Endothelial cell of umbilical vein (primary cell): ENCODE measurements at regions of chr11 and their contacts with region 1.

Region 1: GRCh38 chr11:76734456-76735420 is 48.4 kb upstream of the TSKU start:
- DNase-seq: no peak
- H3K4me3 ChIP-seq: no peak overlapping the region
- H3K27ac ChIP-seq: no peak overlapping the region
- H3K4me1 ChIP-seq: peaks cover 5% of the 10 kb centered on the region
- H3K27me3 ChIP-seq: peaks cover 0 to 4% of the 10 kb centered on the region in 2 experiments
- CTCF ChIP-seq: no peak
- POLR2A ChIP-seq: no peak

Region 2: DNA sequence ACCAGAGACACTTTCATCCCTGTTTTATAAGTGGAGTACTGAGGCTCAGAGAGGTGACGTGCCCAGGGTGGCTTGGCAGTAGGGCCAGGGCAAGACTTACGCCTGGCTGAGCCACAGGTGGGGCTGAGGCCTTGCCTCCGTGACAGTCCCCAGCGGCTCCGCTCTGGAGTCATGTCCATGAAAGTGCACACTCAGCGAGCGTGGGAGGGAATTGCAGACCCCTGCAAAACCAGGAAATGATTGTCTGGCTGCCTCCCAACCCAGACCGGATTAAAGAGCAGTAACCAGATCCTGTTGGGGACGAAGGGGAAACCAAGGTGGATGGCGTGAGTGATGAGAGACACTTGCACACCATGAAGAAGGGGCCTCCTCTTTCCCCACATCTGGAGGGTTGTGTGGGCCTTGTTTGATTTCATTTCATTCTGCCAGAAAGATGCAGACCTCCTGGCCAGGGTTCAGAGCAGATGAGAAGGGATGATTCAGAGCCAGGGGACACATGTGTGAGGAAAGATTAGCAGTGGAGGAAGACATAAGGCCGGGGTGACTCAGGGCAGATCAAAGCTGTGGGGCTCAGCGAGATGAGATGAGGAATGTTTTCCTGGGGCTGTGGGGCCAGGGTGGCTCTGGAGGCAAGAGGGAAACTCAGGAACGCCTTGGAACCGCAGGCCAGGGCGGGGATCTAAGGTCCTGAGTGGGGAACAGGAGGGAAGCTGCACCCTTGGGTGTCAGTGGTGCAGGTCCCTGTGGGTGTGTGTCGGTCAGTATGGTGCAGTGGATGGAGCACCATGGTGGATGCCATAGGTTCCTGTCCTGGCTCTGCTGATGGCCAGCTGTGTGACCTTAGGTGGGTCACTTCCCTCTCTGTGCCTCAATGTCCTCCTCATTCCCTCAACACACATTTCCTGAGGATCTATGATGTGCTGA is 34.3 kb before region 1 on chr11:
- CTCF ChIA-PET with region 1: no interaction called
- POLR2A ChIA-PET with region 1: no interaction called
- dilution Hi-C with region 1: no loop called
- intact Hi-C with region 1: no loop called
- DNase-seq: peak; percentile 95
- H3K4me3 ChIP-seq: no peak overlapping the region
- H3K27ac ChIP-seq: peak overlapping the region; percentile 53
- H3K4me1 ChIP-seq: peaks cover 29% of the 10 kb centered on the region
- H3K27me3 ChIP-seq: no peaks in the 10 kb centered on the region
- CTCF ChIP-seq: no peak
- POLR2A ChIP-seq: peak; percentile 52

Region 3: DNA sequence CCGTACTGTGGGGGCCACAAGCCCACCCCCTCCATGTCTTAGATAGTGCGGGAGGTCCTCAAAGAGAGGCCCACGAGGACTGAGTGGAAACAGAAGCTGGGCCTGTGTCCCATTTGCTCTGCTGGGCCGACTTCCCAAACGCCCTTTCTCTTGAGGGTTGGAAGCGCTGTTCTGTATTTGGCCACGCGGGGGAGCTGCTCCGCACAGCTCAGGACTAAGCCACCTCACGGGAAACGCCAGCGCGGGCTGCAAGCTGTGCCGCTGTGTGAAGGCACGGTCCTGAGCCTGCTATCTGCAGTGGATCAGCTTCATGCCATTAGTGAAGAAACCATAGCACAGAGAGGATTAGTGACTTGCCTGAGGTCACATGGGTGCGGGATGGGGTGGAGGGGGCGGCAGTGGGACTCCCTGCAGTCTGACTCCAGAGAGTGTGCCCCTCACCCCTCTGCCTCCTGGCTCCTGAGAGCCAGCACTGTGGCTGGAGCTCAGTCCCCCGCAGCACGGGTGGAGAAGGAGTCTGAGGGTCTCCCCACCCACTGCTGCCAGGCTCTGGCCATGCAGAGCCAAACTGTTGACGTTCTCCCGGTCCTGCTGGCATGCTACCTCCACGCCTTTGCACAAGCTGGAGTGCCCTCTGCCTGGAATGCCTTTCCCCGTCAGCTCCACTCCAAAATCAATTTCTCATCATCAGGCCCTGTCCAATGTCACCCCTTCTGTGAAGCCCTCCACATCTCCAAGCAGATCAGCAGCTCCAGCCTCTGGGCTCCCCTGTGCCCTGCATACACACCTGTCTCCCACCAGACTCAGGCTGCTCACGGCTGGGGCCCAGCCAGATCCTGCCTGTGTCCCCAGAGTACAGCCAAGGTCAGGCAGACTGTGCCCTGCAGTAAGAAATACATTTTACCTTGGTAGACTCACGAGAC is 12.7 kb before region 1 on chr11:
- CTCF ChIA-PET with region 1: interaction called, 65 read pairs
- POLR2A ChIA-PET with region 1: no interaction called
- dilution Hi-C with region 1: no loop called
- intact Hi-C with region 1: no loop called
- DNase-seq: peak; percentile 77
- H3K4me3 ChIP-seq: no peak overlapping the region
- H3K27ac ChIP-seq: no peak overlapping the region
- H3K4me1 ChIP-seq: no peaks in the 10 kb centered on the region
- H3K27me3 ChIP-seq: peaks cover 20 to 24% of the 10 kb centered on the region in 2 experiments
- CTCF ChIP-seq: peak; percentile 92 to 95
- POLR2A ChIP-seq: no peak

Region 4: DNA sequence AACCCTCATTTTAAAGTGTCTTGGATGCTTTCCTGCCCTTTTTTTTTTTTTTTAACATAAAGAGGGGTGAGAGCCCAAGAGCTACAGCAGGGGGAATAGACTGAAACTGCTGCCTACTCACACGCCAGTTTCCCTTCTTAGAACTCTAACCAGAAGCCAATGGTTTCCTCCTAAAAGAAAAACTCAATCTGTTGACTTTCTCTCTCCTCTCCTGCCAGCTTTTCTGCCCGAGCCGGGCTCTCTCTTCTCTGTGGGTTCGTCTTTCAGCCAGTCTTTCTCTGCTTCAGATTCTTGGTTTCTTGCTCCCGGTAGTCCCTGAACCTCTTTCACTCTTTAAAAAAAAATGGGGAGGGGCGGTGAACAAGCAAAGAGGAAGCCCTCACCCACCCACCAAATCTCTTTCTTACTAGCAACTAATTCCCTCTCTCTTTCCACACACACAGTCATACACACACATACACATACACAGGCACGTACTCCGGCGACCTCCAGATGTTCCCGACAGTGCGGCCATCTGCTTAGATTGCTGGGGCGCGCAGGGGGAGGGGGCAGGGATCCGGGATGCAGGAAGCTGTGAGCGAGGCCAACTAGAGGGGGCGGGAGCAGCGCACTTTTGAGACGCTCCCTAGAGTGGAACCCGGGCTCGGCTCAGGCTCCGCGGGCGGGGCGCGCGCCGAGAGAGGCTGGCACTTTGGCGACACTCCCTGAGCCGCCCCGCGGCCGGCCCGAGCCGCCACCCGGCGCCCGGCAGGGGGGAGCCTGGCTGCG is 48.0 kb after region 1 on chr11:
- CTCF ChIA-PET with region 1: interaction called, 11 read pairs
- POLR2A ChIA-PET with region 1: interaction called, 3 read pairs
- dilution Hi-C with region 1: no loop called
- intact Hi-C with region 1: loop called (anchors 1 kb)
- DNase-seq: peak; percentile 86
- H3K4me3 ChIP-seq: peak overlapping the region; percentile 68 to 91 (median 84)
- H3K27ac ChIP-seq: peak overlapping the region; percentile 44
- H3K4me1 ChIP-seq: peaks cover 2% of the 10 kb centered on the region
- H3K27me3 ChIP-seq: peaks cover 0 to 2% of the 10 kb centered on the region in 2 experiments
- CTCF ChIP-seq: no peak
- POLR2A ChIP-seq: peak; percentile 74

Region 5: GRCh38 chr11:76799066-76799804 is 64.5 kb after region 1 on chr11:
- CTCF ChIA-PET with region 1: interaction called, 287 read pairs
- POLR2A ChIA-PET with region 1: interaction called, 3 read pairs
- dilution Hi-C with region 1: no loop called
- intact Hi-C with region 1: loop called (anchors 1 kb)
- DNase-seq: peak; percentile 62
- H3K4me3 ChIP-seq: peak overlapping the region in 1 of 3 experiments; percentile 30
- H3K27ac ChIP-seq: no peak overlapping the region
- H3K4me1 ChIP-seq: peaks cover 7% of the 10 kb centered on the region
- H3K27me3 ChIP-seq: no peaks in the 10 kb centered on the region
- CTCF ChIP-seq: peak; percentile 89 to 95
- POLR2A ChIP-seq: no peak

Region 6: DNA sequence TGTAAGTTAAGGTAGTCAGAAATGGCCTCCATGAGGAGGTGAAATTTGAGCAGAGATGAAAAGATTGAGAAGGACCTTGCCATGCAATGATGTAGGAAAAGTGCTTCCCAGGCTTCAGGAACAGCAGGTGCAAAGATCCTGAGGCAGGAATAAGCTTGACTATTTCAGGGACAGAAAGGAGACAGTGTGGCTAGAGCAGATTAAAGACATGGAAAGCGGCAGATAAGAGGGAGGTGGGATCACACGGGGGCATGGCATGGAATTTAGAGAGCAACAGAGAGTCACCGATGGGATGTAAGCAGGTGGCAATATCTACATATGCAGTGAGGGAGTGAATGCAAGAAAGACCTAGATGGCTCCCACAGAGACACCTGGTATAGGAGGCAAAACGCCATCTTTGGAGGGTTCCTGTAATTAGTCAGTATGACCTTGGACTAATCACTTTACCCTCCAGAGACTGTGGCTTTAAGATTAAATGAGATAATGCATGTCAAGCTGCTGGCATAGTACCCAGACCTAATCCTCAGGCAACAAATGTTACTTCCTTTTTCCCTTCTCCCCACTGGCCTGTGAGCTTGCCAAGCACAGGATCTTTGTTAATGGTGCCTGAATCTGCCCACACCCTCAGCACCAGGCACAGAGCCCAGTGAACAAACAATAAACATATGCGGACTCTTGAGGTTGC is 101.3 kb after region 1 on chr11:
- CTCF ChIA-PET with region 1: interaction called, 6 read pairs
- POLR2A ChIA-PET with region 1: no interaction called
- dilution Hi-C with region 1: no loop called
- intact Hi-C with region 1: loop called (anchors 1 kb)
- DNase-seq: peak; percentile 64
- H3K4me3 ChIP-seq: no peak overlapping the region
- H3K27ac ChIP-seq: no peak overlapping the region
- H3K4me1 ChIP-seq: peaks cover 33% of the 10 kb centered on the region
- H3K27me3 ChIP-seq: no peaks in the 10 kb centered on the region
- CTCF ChIP-seq: no peak
- POLR2A ChIP-seq: no peak